Motor neuron (in vitro differentiated cells): ENCODE measurements at regions of chr6 and their contacts with region 1.

Region 1: DNA sequence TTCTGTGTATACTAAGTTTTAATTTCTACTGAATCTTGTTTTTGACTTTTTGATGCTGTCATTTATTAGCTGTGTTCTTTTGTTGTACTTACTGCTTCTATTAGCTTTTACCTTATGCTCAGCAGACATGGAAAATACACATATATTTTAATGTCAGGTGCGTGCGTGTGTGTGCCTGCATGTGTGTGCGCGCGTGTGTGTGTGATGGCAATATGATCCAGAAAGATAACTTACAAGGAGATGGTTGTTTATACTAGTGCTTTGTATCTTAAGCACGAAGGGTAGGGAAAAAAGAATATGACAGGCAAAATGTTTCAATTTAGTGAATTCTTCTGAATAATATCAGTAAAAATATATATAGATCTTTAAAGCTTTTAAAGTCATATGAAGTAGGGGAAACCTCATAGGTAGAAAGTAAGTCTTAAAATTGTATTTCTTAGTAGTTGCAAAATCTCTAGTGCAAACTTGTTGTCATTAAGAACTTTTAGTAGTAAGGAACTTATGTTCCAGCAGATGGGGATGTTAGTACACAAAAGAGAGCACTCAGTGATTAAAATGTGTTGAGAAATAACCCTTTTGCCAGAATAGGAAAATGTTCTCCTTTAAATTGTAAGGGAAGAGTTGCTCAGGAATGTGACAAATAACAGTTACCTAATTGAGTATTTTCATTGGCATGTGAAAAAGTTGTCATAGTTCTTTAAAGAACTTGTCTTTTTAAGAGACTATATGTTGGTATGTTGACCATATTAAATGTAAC is 13.2 kb downstream of the QKI start:
- ATAC-seq: peak in 5 of 8 experiments; percentile 20 to 67 (median 42)
- H3K4me3 ChIP-seq: peak overlapping the region in 1 of 5 donors; percentile 2
- H3K27ac ChIP-seq: no peak overlapping the region
- H3K4me1 ChIP-seq: peaks cover 46 to 89% of the 10 kb centered on the region in 2 donors

Region 2: DNA sequence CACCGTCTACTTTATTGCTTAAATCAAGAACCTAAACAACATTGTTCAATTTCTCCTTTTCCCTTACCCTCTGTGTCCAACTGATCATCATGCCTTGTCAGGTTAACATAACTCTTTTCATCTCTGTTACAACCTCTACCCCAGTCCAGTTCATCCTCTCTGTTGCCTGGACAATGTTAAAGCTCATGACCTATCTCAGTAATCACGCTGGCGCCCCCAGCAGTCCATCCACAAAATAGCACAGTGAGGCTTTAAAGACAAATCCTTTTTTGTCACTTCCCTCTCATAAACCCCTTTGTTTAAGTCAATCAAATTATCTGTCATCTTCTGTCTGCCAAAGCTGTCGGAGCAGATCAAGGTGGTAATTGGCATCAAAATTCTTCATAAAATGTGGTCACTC is 127.0 kb after region 1 on chr6:
- in situ Hi-C with region 1: loop called in 2 of 9 experiments (anchors 25 kb)
- ATAC-seq: peak in 3 of 8 experiments; percentile 10 to 57 (median 52)
- H3K4me3 ChIP-seq: no peak overlapping the region
- H3K27ac ChIP-seq: no peak overlapping the region
- H3K4me1 ChIP-seq: no peaks in the 10 kb centered on the region

Region 3: DNA sequence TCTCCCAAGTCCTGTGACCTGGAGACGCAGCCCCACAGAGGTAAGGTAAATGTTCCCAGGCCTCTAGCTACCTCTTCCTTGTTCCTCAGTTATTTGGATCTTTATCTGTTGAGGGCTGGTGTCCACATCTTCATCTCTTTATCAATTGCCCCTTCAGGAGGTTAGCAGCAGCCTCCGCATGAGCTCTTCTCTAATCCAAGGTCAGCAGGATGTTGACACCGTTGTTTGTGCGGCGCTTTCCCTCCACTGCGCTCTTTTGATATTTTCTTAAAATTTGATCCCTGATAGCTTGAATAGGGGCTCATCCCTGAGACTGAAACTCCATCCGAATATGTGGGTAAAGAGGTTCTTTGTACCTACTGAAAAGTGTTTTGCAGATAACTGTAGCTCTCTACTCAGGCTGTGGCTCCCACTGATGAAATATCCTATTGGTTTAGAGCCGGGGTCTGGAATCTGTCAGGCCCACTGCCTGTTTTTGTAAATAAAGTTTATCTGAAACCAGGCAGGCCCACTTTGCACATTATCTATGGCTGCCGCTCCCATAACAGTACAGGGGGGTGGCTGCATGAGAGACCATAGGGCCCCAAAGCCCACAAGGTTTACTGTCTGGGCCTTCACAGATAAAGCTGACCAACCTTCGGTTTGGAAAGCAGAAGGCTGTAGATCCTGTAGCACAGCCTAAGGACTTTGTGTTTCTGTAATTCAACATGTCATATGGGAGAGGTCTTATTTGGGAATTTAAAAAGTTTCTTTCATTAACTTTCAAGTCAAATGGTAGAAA is 349.4 kb after region 1 on chr6:
- in situ Hi-C with region 1: no loop called
- ATAC-seq: no peak
- H3K4me3 ChIP-seq: no peak overlapping the region
- H3K27ac ChIP-seq: no peak overlapping the region
- H3K4me1 ChIP-seq: peaks cover 6 to 10% of the 10 kb centered on the region in 2 donors

Region 4: GRCh38 chr6:163956571-163957407 is 529.1 kb after region 1 on chr6:
- in situ Hi-C with region 1: loop called in 2 of 9 experiments (anchors 10 to 25 kb)
- ATAC-seq: peak in 5 of 8 experiments; percentile 46 to 85 (median 60)
- H3K4me3 ChIP-seq: no peak overlapping the region
- H3K27ac ChIP-seq: no peak overlapping the region
- H3K4me1 ChIP-seq: peaks cover 15 to 28% of the 10 kb centered on the region in 2 donors

Region 5: DNA sequence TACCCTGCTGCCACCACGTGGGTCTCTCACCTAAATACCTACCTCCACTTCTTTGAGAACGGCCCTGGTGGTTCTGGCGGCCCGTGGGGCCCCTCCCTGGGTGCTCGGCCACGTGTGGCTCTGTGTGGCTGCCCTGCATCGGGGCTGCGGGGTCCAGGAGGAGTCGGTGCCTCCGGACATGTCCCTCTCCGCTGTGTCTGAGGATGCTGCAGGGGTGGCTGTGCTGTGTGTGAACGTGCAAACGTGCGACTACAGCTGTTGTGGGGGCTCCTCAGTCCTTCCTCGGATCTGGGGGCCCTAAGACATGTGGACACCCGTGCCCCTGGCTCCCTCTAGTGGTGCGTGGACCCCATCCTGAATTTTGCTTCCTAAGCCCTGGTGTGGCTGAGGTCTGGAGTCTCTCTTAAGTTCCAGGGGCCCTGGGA is 678.7 kb after region 1 on chr6:
- in situ Hi-C with region 1: loop called in 1 of 9 experiments (anchors 25 kb)
- ATAC-seq: peak in 7 of 8 experiments; percentile 39 to 87 (median 48)
- H3K4me3 ChIP-seq: no peak overlapping the region
- H3K27ac ChIP-seq: no peak overlapping the region
- H3K4me1 ChIP-seq: peaks cover 32% of the 10 kb centered on the region in 2 donors

Region 6: GRCh38 chr6:164911873-164912580 is 1484.4 kb after region 1 on chr6:
- in situ Hi-C with region 1: loop called in 3 of 9 experiments (anchors 25 kb)
- ATAC-seq: peak in 7 of 8 experiments; percentile 52 to 81 (median 63)
- H3K4me3 ChIP-seq: no peak overlapping the region
- H3K27ac ChIP-seq: no peak overlapping the region
- H3K4me1 ChIP-seq: peaks cover 9 to 24% of the 10 kb centered on the region in 2 donors

Region 7: GRCh38 chr6:165231581-165232561 is 1804.2 kb after region 1 on chr6:
- in situ Hi-C with region 1: loop called in 3 of 9 experiments (anchors 25 kb)
- ATAC-seq: peak; percentile 53 to 90 (median 80)
- H3K4me3 ChIP-seq: no peak overlapping the region
- H3K27ac ChIP-seq: peak overlapping the region; percentile 37 to 42
- H3K4me1 ChIP-seq: peaks cover 30 to 34% of the 10 kb centered on the region in 2 donors